ENCODE measurements at regions of chr12 and their contacts with region 1.

Region 1: DNA sequence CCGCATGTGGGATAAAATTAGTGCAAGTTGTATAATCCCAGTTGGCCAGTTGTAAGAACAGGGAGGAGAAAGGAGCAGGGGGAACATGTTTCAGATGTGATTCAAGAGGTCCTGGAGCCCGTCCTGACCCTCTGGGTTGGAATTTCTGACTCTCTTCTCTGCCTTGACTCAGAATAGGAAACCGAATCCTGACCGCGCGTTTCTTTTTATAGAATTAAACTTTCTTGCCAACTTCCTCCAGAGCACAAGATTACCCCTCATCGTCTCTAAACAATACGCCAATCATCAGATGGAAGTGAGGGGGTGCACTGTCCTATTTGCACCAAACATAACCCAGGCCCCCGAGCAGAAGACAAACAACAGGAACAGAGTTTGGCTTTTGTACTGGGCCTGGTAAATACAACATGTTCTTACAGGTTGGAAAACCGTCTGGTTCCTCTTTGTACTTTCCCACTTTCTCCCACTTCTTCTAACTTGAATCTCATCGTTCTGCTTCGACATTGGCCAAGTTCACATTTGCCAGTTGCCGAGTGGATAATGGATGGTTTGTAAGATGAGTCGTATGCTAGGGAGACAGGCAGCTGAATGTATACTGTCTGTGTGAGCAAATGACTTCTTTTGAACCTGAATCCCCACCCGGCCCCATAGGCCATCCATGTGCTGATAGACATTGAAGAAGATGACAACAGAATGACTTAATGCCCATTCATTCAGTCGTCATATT is 42.6 kb upstream of the MED13L start:
- DNase-seq: peak; percentile 17
- H3K4me3 Mint-ChIP-seq: peak overlapping the region; percentile 73
- H3K27ac Mint-ChIP-seq: peak overlapping the region; percentile 84
- H3K4me1 Mint-ChIP-seq: peaks cover 50% of the 10 kb centered on the region
- H3K27me3 Mint-ChIP-seq: peaks cover 3% of the 10 kb centered on the region

Region 2: DNA sequence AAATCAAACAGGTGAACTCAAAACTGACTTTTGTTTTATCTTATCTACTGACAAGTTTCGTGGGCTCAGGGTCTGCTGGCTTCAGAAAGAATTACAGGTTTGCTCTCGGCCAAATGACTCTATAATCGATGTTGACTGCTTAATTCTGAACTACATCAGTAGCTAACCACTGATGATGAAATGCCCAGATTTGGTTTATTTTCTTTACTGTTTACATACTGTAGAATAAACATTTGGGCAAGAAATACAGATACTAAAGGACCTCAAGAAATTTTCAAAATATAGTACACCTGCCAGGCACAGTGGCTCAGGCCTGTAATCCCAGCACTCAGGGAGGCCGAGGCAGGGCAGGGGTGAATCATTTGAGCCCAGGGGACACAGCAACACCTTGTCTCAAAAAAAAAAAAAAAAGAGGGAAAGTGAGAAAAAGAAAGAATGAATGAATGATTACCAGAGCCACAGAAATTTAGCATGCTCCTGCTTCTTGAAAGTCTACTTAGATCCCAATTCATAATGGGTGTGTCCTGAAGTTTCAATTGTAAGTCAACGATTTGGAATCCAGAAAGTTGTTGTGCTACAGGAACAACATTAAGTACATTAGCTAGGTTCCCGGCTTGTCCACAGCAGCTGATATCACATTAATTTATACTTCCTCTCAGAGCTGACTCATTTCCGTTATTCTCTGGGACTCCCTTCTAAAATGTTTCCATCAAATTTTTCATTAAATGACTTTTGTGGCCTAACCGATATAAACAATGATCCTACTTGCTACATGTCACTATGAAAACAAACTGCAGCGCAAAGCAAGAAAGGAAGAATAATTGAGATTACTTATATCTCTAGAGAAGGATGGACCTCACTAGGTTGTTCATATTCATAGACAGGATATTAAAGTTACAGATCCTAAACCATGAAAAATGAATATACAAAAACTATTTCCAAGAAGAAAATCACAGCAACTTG is 176.8 kb before region 1 on chr12:
- intact Hi-C with region 1: loop called (anchors 5 kb)
- DNase-seq: no peak
- H3K4me3 Mint-ChIP-seq: peak overlapping the region; percentile 45
- H3K27ac Mint-ChIP-seq: peak overlapping the region; percentile 81
- H3K4me1 Mint-ChIP-seq: peaks cover 52% of the 10 kb centered on the region
- H3K27me3 Mint-ChIP-seq: no peaks in the 10 kb centered on the region

Region 3: DNA sequence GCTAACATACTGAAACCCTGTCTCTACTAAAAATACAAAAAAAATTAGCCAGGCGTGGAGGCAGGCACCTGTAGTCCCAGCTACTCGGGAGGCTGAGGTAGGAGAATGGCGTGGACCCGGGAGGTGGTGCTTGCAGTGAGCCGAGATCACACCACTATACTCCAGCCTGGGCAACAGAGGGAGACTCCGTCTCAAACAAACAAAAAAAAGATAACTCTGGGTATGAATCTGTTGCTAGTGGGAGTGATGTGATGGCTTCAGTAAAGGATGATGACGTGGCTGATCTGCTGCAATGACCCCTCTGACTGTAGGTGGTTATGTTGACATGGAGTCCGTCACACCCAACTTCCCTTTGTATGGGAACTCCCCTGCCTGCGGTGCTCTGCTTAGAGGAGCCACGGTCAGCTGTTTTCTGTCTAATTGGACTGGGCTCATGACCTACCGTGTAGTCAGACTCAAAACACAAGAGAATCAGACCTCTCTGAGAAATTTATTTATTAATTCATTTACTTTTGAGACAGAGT is 16.5 kb after region 1 on chr12:
- intact Hi-C with region 1: no loop called
- DNase-seq: no peak
- H3K4me3 Mint-ChIP-seq: no peak overlapping the region
- H3K27ac Mint-ChIP-seq: no peak overlapping the region
- H3K4me1 Mint-ChIP-seq: no peaks in the 10 kb centered on the region
- H3K27me3 Mint-ChIP-seq: peaks cover 3% of the 10 kb centered on the region

Region 4: GRCh38 chr12:116358893-116359761 is 39.1 kb after region 1 on chr12:
- intact Hi-C with region 1: loop called (anchors 1 kb)
- DNase-seq: peak; percentile 58
- H3K4me3 Mint-ChIP-seq: peak overlapping the region; percentile 56
- H3K27ac Mint-ChIP-seq: peak overlapping the region; percentile 85
- H3K4me1 Mint-ChIP-seq: peaks cover 33% of the 10 kb centered on the region
- H3K27me3 Mint-ChIP-seq: peaks cover 4% of the 10 kb centered on the region